ENCODE measurements at regions of chr14 and their contacts with region 1.

Region 1: DNA sequence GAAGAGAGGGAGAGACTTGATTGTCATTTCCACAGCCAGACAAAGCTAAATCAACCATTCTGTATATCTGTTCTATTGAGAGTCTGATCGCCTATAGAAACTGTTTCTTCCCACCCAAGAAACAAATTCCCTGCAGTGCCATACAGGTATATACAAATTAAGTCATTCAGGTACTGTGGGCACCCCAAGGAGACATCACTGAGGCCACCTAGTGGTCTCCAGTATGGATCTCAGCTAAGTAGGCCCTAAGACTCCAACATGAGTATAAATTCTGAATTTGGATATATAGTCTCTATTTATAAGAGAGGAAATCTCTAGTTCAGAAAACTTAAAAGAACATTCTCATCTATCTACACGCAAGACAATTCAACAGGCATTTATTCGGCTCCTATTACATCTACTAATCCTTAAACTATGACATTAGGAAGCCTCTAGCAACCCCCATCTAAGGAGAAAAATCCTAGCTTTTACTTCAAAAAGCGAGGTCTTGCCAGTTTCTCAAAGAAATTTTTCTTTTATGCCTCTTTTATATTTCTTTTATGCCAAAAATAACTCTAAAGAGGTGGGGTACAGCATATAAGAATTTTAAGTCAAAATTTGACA is 62.6 kb downstream of the DCAF5 start:
- DNase-seq: peak; percentile 51
- H3K4me3 ChIP-seq: no peak overlapping the region
- H3K27ac ChIP-seq: peak overlapping the region; percentile 81 to 87
- H3K4me1 ChIP-seq: peaks cover 4% of the 10 kb centered on the region
- H3K27me3 ChIP-seq: no peaks in the 10 kb centered on the region
- CTCF ChIP-seq: peak; percentile 39 to 71 (median 62)
- POLR2A ChIP-seq: no peak

Region 2: DNA sequence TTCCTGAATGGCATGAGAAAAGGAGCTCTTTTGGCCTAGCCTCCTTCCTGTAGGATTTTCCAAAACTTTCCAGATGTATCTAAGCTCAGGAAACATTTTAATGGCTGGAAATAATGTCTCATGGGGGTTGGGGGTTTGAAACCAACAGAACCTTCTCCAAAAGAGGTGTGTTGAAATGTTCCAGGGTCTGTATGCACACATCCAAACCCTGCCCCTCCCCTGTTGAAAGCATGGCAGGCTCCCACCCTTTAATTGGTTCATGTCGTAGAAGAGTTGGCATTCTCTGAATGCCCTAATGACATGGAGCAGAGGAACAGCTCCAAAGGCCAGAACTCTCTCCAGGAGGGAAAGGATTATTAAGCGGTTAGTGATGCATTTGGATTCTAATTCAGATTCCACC is 650.6 kb before region 1 on chr14:
- intact Hi-C with region 1: no loop called
- DNase-seq: no peak
- H3K4me3 ChIP-seq: no peak overlapping the region
- H3K27ac ChIP-seq: no peak overlapping the region
- H3K4me1 ChIP-seq: no peaks in the 10 kb centered on the region
- H3K27me3 ChIP-seq: no peaks in the 10 kb centered on the region
- CTCF ChIP-seq: no peak
- POLR2A ChIP-seq: no peak

Region 3: GRCh38 chr14:68911594-68912227 is 178.6 kb before region 1 on chr14:
- intact Hi-C with region 1: loop called (anchors 5 kb)
- DNase-seq: peak; percentile 66
- H3K4me3 ChIP-seq: no peak overlapping the region
- H3K27ac ChIP-seq: peak overlapping the region; percentile 33
- H3K4me1 ChIP-seq: no peaks in the 10 kb centered on the region
- H3K27me3 ChIP-seq: no peaks in the 10 kb centered on the region
- CTCF ChIP-seq: peak; percentile 90 to 97 (median 95)
- POLR2A ChIP-seq: no peak

Region 4: GRCh38 chr14:69387311-69387710 is 297.0 kb after region 1 on chr14:
- intact Hi-C with region 1: no loop called
- DNase-seq: no peak
- H3K4me3 ChIP-seq: no peak overlapping the region
- H3K27ac ChIP-seq: no peak overlapping the region
- H3K4me1 ChIP-seq: no peaks in the 10 kb centered on the region
- H3K27me3 ChIP-seq: no peaks in the 10 kb centered on the region
- CTCF ChIP-seq: no peak
- POLR2A ChIP-seq: no peak